ENCODE measurements at regions of chr14 and their contacts with region 1.

Region 1: GRCh38 chr14:21103710-21104447 is 3.0 kb downstream of the TMEM253 start:
- DNase-seq: peak; percentile 98
- ATAC-seq: peak; percentile 88
- H3K4me3 Mint-ChIP-seq: peak overlapping the region; percentile 80
- H3K27ac Mint-ChIP-seq: peak overlapping the region; percentile 90
- H3K4me1 Mint-ChIP-seq: peaks cover 36% of the 10 kb centered on the region
- H3K27me3 Mint-ChIP-seq: no peaks in the 10 kb centered on the region
- CTCF ChIP-seq: peak; percentile 64

Region 2: DNA sequence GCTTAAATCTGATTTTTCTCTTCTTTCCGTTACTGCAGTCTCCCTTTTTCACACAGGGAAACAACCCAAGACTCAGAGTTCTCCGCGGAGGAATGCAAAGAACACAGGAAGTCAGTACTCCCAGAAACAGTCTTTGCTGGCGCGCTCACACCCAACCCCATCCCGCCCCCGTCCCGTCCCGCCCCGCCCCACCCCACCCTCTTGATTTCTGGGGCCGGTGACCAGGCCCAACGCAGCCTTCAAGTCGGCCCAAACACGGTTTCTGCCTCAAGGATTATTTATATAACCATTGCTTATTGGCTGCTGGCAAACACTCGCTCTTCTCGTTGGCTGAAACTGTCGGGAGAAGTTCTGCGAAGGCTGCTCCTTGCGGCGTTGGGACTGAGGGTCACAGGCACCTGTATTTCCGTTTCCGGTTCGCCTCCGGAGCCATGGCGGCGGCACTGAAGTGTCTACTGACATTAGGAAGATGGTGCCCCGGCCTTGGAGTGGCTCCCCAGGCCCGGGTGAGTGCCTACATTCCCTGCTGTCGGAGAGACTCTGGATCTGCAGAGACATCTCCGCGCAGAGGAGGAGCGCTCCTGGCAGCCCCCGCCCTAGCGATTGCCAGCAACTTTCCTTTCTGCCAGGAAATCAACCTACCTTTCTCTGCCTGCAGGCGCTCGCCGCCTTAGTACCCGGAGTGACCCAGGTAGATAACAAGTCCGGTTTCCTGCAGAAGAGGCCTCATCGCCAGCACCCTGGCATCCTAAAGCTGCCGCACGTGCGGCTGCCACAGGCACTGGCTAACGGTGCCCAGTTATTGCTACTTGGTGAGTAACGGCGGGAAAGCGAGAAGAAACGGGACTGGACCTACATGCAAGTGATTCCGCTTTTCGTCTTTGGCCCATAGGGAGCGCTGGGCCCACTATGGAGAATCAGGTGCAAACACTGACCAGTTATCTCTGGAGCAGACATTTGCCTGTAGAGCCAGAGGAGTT is 114.0 kb before region 1 on chr14 and contains the start of gene METTL17:
- CTCF ChIA-PET with region 1: interaction called, 10 read pairs
- POLR2A ChIA-PET with region 1: no interaction called
- intact Hi-C with region 1: no loop called
- DNase-seq: peak; percentile 94
- ATAC-seq: peak; percentile 97
- H3K4me3 Mint-ChIP-seq: peak within 1 kb of the TSS; percentile 84
- H3K27ac Mint-ChIP-seq: peak within 1 kb of the TSS; percentile 88
- H3K4me1 Mint-ChIP-seq: peaks cover 26% of the 10 kb centered on the region
- H3K27me3 Mint-ChIP-seq: no peaks in the 10 kb centered on the region
- CTCF ChIP-seq: peak; percentile 51
- total RNA-seq, gene METTL17: 88.4 to 92.0 TPM

Region 3: DNA sequence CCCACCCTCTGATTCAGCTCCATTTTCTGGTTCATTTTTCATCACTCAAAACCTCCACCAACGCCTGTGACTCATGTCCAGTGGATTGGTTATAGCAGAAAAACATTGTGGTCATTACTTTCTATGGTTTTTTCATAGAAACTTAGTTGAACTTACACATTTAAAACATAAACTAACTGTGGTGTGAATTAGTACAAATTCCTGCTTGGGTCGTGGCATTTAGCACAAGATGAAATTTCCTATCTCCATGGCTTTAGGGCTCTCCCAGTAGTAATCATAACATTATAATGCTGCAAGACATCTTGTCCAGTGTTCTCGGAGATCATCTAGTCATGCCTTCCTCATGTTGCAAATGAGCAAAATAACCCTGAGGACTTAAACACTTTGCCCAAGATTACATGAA is 54.6 kb before region 1 on chr14:
- CTCF ChIA-PET with region 1: interaction called, 12 read pairs
- POLR2A ChIA-PET with region 1: no interaction called
- intact Hi-C with region 1: no loop called
- DNase-seq: no peak
- ATAC-seq: no peak
- H3K4me3 Mint-ChIP-seq: no peak overlapping the region
- H3K27ac Mint-ChIP-seq: no peak overlapping the region
- H3K4me1 Mint-ChIP-seq: peaks cover 4% of the 10 kb centered on the region
- H3K27me3 Mint-ChIP-seq: peaks cover 1% of the 10 kb centered on the region
- CTCF ChIP-seq: no peak

Region 4: DNA sequence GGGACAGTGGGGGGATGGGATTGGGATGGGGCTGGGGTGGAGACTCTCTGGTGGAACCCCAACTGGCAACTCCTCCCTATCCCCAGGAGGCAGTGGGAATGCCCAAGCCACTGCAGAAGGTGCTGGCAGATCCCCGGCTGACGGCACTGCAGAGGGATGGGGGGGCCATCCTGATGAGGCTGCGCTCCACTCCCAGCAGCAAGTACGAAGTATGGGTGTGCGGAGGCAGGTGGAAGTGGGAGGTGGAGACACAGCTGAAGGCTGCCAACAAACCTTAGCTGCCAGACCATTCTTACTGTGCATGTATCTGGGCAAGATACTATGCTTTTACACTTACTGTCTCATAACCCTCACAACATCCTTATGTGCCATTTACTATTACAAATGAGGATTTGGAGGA is 25.6 kb before region 1 on chr14:
- CTCF ChIA-PET with region 1: interaction called, 13 read pairs
- POLR2A ChIA-PET with region 1: no interaction called
- intact Hi-C with region 1: no loop called
- DNase-seq: no peak
- ATAC-seq: no peak
- H3K4me3 Mint-ChIP-seq: no peak overlapping the region
- H3K27ac Mint-ChIP-seq: no peak overlapping the region
- H3K4me1 Mint-ChIP-seq: no peaks in the 10 kb centered on the region
- H3K27me3 Mint-ChIP-seq: peaks cover 5% of the 10 kb centered on the region
- CTCF ChIP-seq: no peak

Region 5: GRCh38 chr14:21092273-21093011 is 11.4 kb before region 1 on chr14:
- CTCF ChIA-PET with region 1: interaction called, 187 read pairs
- POLR2A ChIA-PET with region 1: interaction called, 30 read pairs
- intact Hi-C with region 1: no loop called
- DNase-seq: peak; percentile 94
- ATAC-seq: peak; percentile 97
- H3K4me3 Mint-ChIP-seq: no peak overlapping the region
- H3K27ac Mint-ChIP-seq: no peak overlapping the region
- H3K4me1 Mint-ChIP-seq: peaks cover 15% of the 10 kb centered on the region
- H3K27me3 Mint-ChIP-seq: no peaks in the 10 kb centered on the region
- CTCF ChIP-seq: peak; percentile 100

Region 6: DNA sequence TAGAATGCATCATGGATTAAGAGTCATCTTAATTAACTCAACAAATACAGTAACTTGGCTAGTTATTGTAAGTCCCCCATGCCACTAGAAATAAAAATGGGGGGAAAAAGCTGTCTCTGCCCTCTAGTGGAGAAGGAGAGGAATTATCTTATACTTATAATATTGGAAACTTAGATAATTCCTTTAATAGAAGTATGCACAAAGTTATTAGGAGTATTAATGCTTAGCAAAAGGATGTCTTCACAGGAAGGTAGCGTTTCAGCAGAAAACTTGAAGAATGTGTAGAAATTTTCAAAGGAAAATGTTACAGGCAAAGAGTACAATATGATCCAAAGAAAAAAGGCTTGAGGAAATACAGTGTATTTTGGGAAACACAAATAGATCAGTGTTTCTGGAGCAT is 32.1 kb after region 1 on chr14:
- CTCF ChIA-PET with region 1: interaction called, 14 read pairs
- POLR2A ChIA-PET with region 1: no interaction called
- intact Hi-C with region 1: no loop called
- DNase-seq: no peak
- ATAC-seq: no peak
- H3K4me3 Mint-ChIP-seq: no peak overlapping the region
- H3K27ac Mint-ChIP-seq: no peak overlapping the region
- H3K4me1 Mint-ChIP-seq: no peaks in the 10 kb centered on the region
- H3K27me3 Mint-ChIP-seq: no peaks in the 10 kb centered on the region
- CTCF ChIP-seq: peak; percentile 85

Region 7: DNA sequence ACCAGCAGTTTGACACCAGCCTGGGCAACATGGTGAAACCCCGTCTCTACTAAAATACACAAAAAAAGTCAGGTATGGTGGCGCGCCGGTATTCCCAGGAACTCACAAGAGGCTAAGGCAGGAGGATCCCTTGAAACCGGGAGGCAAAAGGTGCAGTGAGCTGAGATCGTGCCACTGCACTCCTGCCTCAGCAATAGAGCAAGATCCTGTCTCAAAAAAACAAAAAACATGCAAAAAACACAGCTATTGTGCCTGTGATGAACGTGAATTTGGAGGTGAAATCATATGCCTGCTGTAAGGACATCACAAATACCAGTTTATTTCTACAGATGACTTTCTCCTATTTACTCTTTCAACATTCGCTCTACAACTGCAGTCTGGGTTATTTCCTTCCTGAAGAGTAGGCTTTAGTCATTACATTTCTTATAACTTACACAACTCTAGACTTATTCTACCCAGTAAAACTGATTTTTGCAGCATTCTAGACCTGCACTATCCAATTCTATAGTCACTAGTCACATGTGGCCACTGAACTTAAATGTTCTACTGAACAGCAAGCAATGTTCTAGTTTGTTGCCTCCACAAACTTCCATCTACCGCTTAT is 117.1 kb after region 1 on chr14:
- CTCF ChIA-PET with region 1: no interaction called
- POLR2A ChIA-PET with region 1: no interaction called
- intact Hi-C with region 1: no loop called
- DNase-seq: no peak
- ATAC-seq: no peak
- H3K4me3 Mint-ChIP-seq: no peak overlapping the region
- H3K27ac Mint-ChIP-seq: peak overlapping the region; percentile 76
- H3K4me1 Mint-ChIP-seq: peaks cover 70% of the 10 kb centered on the region
- H3K27me3 Mint-ChIP-seq: no peaks in the 10 kb centered on the region
- CTCF ChIP-seq: no peak

Region 8: GRCh38 chr14:21626491-21627230 is 522.8 kb after region 1 on chr14:
- CTCF ChIA-PET with region 1: no interaction called
- POLR2A ChIA-PET with region 1: no interaction called
- intact Hi-C with region 1: no loop called
- DNase-seq: no peak
- ATAC-seq: no peak
- H3K4me3 Mint-ChIP-seq: no peak overlapping the region
- H3K27ac Mint-ChIP-seq: no peak overlapping the region
- H3K4me1 Mint-ChIP-seq: no peaks in the 10 kb centered on the region
- H3K27me3 Mint-ChIP-seq: peaks cover 4% of the 10 kb centered on the region
- CTCF ChIP-seq: no peak

Measured in activated CD8-positive, alpha-beta T cell treated with anti-CD3 and anti-CD28 coated beads for 36 hours (primary cell).